CD8-positive, alpha-beta memory T cell (primary cell): ENCODE measurements at regions of chr6 and their contacts with region 1.

Region 1: DNA sequence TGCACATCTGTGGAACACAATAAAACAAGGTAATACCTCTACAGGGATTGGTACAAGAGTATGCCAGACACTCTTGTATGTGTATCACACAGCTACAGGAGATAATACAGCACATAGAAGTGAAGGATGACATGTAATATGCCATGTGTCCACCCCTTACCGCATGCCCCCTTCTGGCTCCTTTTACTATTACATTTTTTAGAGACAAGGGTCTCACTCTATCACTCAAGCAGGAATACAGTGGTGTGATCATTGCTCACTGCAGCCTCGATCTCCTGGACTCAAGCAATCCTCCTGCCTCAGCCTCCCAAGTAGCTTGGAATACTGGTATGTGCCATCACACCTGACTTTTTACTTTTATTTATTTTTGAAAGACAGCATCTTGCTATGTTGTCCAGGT is 4.2 kb upstream of the NCR3 start:
- DNase-seq: peak in 3 of 5 donors; percentile 64 to 80 (median 67)
- H3K4me3 ChIP-seq: no peak overlapping the region
- H3K4me3 Mint-ChIP-seq: peak overlapping the region in 6 of 7 donors; percentile 19 to 66 (median 40)
- H3K27ac ChIP-seq: no peak overlapping the region
- H3K27ac Mint-ChIP-seq: peak overlapping the region in 7 of 8 donors; percentile 48 to 86 (median 73)
- H3K4me1 ChIP-seq: peaks cover 55% of the 10 kb centered on the region
- H3K4me1 Mint-ChIP-seq: peaks cover 38 to 54% (median 50%) of the 10 kb centered on the region in 3 donors
- H3K27me3 ChIP-seq: no peaks in the 10 kb centered on the region
- H3K27me3 Mint-ChIP-seq: peaks cover 0 to 2% of the 10 kb centered on the region in 2 donors

Region 2: DNA sequence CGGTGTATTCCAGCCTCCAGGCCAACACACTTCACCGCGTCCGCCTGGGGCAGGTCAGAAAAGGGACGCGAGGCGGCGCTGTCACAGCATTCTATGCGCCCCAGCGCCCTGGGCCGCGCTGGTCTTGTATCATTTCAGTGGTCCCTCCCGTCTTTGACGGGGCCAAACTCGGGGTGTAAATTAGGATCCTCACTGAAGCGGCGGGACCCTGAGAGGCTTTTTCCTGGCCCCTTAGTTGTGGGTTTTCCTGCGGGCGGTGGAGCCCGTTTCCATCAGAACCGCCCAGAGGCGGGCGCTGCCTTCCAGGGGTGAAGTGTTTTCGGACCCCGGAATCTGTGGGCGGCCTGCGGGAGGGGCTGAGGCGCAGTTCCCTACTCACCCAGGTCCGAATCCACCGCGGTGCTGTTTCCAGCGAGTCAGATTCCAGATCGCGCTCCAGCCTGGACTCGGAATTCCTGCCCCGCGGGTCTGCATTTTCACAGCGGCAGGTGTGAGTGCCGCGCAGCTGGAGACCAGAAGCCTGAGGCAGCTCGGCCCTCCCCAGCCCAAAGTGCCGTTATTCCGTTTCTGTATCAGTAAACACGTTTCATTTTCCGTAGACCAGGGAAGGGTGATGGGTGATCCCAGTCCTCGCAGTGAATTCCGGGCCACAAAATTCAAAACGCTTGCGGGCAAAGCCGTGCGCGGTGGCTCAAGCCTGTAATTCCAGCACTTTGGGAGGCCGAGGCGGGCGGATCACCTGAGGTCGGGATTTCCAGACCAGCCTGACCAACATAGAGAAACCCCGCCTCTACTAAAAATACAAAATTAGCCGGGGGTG is 102.9 kb before region 1 on chr6:
- CTCF ChIA-PET with region 1: interaction called, 32 read pairs
- POLR2A ChIA-PET with region 1: interaction called, 4 read pairs
- DNase-seq: peak; percentile 46 to 77 (median 62)
- H3K4me3 ChIP-seq: peak overlapping the region; percentile 93
- H3K4me3 Mint-ChIP-seq: peak overlapping the region; percentile 78 to 99 (median 93)
- H3K27ac ChIP-seq: peak overlapping the region; percentile 81
- H3K27ac Mint-ChIP-seq: peak overlapping the region; percentile 45 to 97 (median 88)
- H3K4me1 ChIP-seq: peaks cover 31% of the 10 kb centered on the region
- H3K4me1 Mint-ChIP-seq: peaks cover 47 to 62% (median 59%) of the 10 kb centered on the region in 3 donors
- H3K27me3 ChIP-seq: no peaks in the 10 kb centered on the region
- H3K27me3 Mint-ChIP-seq: no peaks in the 10 kb centered on the region

Region 3: GRCh38 chr6:31546962-31547726 is 49.9 kb before region 1 on chr6 and contains the start of gene NFKBIL1:
- CTCF ChIA-PET with region 1: interaction called, 504 read pairs
- POLR2A ChIA-PET with region 1: interaction called, 26 read pairs
- DNase-seq: peak; percentile 84 to 92 (median 87)
- H3K4me3 ChIP-seq: peak within 1 kb of the TSS; percentile 67
- H3K4me3 Mint-ChIP-seq: peak within 1 kb of the TSS; percentile 74 to 93 (median 91)
- H3K27ac ChIP-seq: peak within 1 kb of the TSS; percentile 71
- H3K27ac Mint-ChIP-seq: peak within 1 kb of the TSS; percentile 83 to 99 (median 96)
- H3K4me1 ChIP-seq: peaks cover 30% of the 10 kb centered on the region
- H3K4me1 Mint-ChIP-seq: peaks cover 38 to 50% (median 49%) of the 10 kb centered on the region in 3 donors
- H3K27me3 ChIP-seq: no peaks in the 10 kb centered on the region
- H3K27me3 Mint-ChIP-seq: no peaks in the 10 kb centered on the region
- total RNA-seq, gene NFKBIL1: 13.5 to 13.8 TPM

Region 4: DNA sequence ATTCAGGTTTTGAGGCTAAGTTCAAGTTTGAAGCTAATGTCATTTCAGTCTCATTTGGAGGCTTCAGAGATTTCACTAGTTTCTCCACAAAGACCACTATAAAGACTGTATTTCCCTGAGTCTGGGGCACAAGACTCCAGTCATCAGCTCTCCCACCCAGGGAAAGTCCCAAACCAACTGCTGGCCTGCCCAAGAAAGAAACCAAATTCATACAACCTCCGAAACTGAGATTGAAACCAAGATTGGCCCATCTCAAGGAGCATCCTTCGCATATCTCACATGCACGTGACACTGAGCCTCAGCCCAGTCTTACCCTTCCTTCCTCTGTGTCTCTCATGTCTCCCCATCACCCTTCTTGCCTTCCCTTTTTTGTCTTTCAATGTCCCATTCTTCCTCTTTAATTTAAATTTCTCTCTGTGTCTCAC is 28.5 kb before region 1 on chr6:
- CTCF ChIA-PET with region 1: interaction called, 692 read pairs
- POLR2A ChIA-PET with region 1: interaction called, 8 read pairs
- DNase-seq: peak; percentile 51 to 84 (median 75)
- H3K4me3 ChIP-seq: peak overlapping the region; percentile 1
- H3K4me3 Mint-ChIP-seq: peak overlapping the region; percentile 41 to 81 (median 70)
- H3K27ac ChIP-seq: peak overlapping the region; percentile 52
- H3K27ac Mint-ChIP-seq: peak overlapping the region; percentile 92 to 100 (median 96)
- H3K4me1 ChIP-seq: peaks cover 65% of the 10 kb centered on the region
- H3K4me1 Mint-ChIP-seq: peaks cover 68 to 87% (median 82%) of the 10 kb centered on the region in 3 donors
- H3K27me3 ChIP-seq: no peaks in the 10 kb centered on the region
- H3K27me3 Mint-ChIP-seq: peaks cover 0 to 2% of the 10 kb centered on the region in 2 donors

Region 5: GRCh38 chr6:31609519-31610406 is 12.8 kb after region 1 on chr6:
- CTCF ChIA-PET with region 1: interaction called, 15 read pairs
- POLR2A ChIA-PET with region 1: interaction called, 4 read pairs
- DNase-seq: no peak
- H3K4me3 ChIP-seq: no peak overlapping the region
- H3K4me3 Mint-ChIP-seq: no peak overlapping the region
- H3K27ac ChIP-seq: no peak overlapping the region
- H3K27ac Mint-ChIP-seq: peak overlapping the region in 1 of 8 donors; percentile 46
- H3K4me1 ChIP-seq: peaks cover 2% of the 10 kb centered on the region
- H3K4me1 Mint-ChIP-seq: peaks cover 2 to 3% (median 3%) of the 10 kb centered on the region in 3 donors
- H3K27me3 ChIP-seq: no peaks in the 10 kb centered on the region
- H3K27me3 Mint-ChIP-seq: no peaks in the 10 kb centered on the region

Region 6: DNA sequence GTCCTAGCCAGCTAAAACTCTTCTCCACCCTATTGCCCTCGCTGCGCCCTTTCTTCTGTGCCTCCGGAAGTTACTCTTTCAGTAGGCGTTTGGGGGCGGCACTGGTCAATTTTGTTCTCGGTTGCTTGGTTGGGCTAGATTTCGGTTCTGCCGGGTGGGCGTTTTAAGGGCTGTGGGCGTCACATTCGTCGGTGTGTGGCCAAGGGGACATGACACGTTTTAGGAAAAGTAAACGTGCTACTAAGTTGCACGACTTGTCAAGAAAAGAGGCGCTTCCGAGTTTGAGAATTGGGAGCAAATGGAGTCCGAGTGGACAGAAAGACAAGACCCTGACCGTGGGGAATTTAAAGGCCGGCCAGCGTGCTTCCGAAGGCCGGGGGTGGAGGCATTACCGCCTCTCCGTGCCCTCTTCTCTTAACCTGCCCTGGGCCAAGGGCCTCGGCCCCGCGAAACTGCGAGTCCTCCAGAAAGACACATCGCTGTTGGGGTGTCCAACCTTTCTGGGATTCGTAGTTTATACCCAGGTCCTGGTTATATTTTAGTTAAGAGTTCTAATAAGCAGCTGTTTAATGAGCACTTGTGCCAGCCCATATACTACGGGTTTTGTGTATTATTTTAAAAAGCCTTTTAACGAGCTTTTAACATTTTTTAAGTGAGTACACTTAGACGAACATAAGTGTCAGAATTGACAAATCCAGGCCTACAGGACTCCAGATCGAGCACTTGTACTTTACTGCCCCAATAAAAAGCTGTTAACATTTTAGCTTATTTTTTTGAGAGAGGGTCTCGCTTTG is 56.1 kb after region 1 on chr6:
- CTCF ChIA-PET with region 1: interaction called, 16 read pairs
- POLR2A ChIA-PET with region 1: interaction called, 4 read pairs
- DNase-seq: peak in 4 of 5 donors; percentile 79 to 92 (median 88)
- H3K4me3 ChIP-seq: peak overlapping the region; percentile 97
- H3K4me3 Mint-ChIP-seq: peak overlapping the region; percentile 90 to 99 (median 96)
- H3K27ac ChIP-seq: peak overlapping the region; percentile 94
- H3K27ac Mint-ChIP-seq: peak overlapping the region; percentile 95 to 100 (median 100)
- H3K4me1 ChIP-seq: peaks cover 30% of the 10 kb centered on the region
- H3K4me1 Mint-ChIP-seq: peaks cover 49 to 77% (median 61%) of the 10 kb centered on the region in 3 donors
- H3K27me3 ChIP-seq: no peaks in the 10 kb centered on the region
- H3K27me3 Mint-ChIP-seq: peaks cover 0 to 9% of the 10 kb centered on the region in 2 donors